Activated naive CD4-positive, alpha-beta T cell treated with anti-CD3 and anti-CD28 coated beads for 36 hours (primary cell): ENCODE measurements at regions of chr6 and their contacts with region 1.

Region 1: GRCh38 chr6:30616811-30617564 is at the start of gene PPP1R10:
- DNase-seq: peak; percentile 99
- H3K4me3 Mint-ChIP-seq: peak within 1 kb of the TSS; percentile 87
- H3K27ac Mint-ChIP-seq: peak within 1 kb of the TSS; percentile 95
- H3K4me1 Mint-ChIP-seq: peaks cover 37% of the 10 kb centered on the region
- H3K27me3 Mint-ChIP-seq: no peaks in the 10 kb centered on the region
- total RNA-seq, gene PPP1R10: 47.1 to 49.1 TPM

Region 2: GRCh38 chr6:30212865-30213666 is 403.9 kb before region 1 on chr6 and contains the start of gene TRIM26:
- CTCF ChIA-PET with region 1: no interaction called
- intact Hi-C with region 1: loop called (anchors 1 kb)
- DNase-seq: peak; percentile 99
- H3K4me3 Mint-ChIP-seq: peak within 1 kb of the TSS; percentile 94
- H3K27ac Mint-ChIP-seq: peak within 1 kb of the TSS; percentile 99
- H3K4me1 Mint-ChIP-seq: peaks cover 41% of the 10 kb centered on the region
- H3K27me3 Mint-ChIP-seq: no peaks in the 10 kb centered on the region
- total RNA-seq, gene TRIM26: 36.8 to 38.7 TPM

Region 3: DNA sequence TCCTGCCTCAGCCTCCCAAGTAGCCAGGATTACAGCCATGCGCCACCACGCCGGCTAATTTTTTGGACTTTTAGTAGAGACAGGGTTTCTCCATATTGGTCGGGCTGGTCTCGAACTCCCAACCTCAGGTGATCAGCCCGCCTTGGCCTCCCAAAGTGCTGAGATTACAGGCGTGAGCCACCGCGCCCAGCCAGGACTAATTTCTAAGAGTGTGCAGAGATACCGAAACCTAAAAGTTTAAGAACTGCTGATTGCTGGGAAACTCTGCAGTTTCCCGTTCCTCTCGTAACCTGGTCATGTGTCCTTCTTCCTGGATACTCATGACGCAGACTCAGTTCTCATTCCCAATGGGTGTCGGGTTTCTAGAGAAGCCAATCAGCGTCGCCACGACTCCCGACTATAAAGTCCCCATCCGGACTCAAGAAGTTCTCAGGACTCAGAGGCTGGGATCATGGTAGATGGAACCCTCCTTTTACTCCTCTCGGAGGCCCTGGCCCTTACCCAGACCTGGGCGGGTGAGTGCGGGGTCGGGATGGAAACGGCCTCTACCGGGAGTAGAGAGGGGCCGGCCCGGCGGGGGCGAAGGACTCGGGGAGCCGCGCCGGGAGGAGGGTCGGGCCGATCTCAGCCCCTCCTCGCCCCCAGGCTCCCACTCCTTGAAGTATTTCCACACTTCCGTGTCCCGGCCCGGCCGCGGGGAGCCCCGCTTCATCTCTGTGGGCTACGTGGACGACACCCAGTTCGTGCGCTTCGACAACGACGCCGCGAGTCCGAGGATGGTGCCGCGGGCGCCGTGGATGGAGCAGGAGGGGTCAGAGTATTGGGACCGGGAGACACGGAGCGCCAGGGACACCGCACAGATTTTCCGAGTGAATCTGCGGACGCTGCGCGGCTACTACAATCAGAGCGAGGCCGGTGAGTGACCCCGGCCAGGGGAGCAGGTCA is 127.6 kb before region 1 on chr6 and contains the start of gene HLA-E:
- CTCF ChIA-PET with region 1: interaction called, 18 read pairs
- intact Hi-C with region 1: loop called (anchors 1 kb)
- DNase-seq: peak; percentile 95
- H3K4me3 Mint-ChIP-seq: peak within 1 kb of the TSS; percentile 90
- H3K27ac Mint-ChIP-seq: peak within 1 kb of the TSS; percentile 97
- H3K4me1 Mint-ChIP-seq: peaks cover 54% of the 10 kb centered on the region
- H3K27me3 Mint-ChIP-seq: no peaks in the 10 kb centered on the region
- total RNA-seq, gene HLA-E: 598 to 608 TPM

Region 4: DNA sequence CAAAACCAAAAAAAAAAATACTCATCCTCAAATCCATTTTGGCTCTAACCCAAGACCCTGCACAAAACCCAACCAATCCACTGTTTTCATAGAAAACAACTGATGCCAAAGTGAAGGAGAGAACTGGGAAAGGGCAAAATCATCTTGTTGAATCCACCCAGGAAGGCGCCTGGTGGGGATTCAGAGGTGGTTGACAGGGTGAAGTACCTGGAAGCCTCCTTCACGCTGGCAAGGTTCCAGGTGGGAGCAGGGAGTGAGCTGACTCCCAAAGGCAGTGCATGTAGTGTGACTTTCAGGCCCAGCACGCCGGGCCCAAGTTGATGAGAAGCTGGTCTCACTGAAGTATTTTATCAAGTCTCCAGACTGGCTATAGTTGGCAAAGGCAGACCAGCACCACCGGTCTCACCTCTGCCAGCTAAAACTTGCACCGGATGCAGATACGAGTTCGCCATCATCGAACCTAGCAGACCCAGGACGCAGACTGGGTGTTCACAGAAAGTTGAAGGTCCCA is 16.5 kb before region 1 on chr6:
- CTCF ChIA-PET with region 1: interaction called, 38 read pairs
- intact Hi-C with region 1: no loop called
- DNase-seq: no peak
- H3K4me3 Mint-ChIP-seq: no peak overlapping the region
- H3K27ac Mint-ChIP-seq: peak overlapping the region; percentile 37
- H3K4me1 Mint-ChIP-seq: peaks cover 9% of the 10 kb centered on the region
- H3K27me3 Mint-ChIP-seq: no peaks in the 10 kb centered on the region

Region 5: DNA sequence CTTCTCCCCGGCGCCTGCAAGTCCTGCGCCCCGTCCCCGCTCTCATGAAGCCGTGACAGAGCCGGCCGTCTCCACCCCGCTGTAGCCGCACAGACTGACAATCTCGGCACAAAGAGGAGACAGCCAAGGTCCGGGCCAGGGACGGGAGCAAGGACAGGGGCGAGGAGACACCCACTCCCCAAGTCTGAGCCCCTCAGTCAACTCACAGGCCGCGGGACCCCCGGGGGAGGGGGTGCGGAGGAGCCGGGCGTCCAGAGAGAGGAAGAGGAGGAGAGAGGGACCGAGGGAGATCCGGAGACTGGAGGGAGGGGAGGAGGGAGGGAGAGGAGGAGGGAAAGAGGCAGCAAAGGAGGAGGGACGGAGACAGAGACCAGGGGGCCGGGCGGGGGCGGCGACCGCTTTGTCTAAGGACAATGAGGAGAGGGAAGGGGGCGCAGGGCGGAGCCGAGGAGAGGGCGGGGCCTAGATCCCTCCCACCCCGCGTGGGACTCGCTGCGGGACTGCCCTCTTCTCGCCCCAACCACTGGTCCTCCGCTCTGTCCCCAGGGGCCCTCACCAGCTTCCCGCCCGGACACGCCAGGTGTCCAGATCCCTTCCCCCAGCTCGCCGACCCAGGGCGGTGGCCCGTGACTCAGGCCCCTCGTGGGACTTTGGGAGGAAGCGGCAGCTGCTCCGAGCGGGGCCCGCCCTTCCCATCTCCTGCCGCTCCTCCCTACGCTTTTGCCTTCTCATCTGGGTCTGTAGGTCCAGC is 70.1 kb after region 1 on chr6:
- CTCF ChIA-PET with region 1: no interaction called
- intact Hi-C with region 1: loop called (anchors 1 kb)
- DNase-seq: peak; percentile 77
- H3K4me3 Mint-ChIP-seq: peak overlapping the region; percentile 96
- H3K27ac Mint-ChIP-seq: peak overlapping the region; percentile 100
- H3K4me1 Mint-ChIP-seq: peaks cover 36% of the 10 kb centered on the region
- H3K27me3 Mint-ChIP-seq: no peaks in the 10 kb centered on the region

Region 6: DNA sequence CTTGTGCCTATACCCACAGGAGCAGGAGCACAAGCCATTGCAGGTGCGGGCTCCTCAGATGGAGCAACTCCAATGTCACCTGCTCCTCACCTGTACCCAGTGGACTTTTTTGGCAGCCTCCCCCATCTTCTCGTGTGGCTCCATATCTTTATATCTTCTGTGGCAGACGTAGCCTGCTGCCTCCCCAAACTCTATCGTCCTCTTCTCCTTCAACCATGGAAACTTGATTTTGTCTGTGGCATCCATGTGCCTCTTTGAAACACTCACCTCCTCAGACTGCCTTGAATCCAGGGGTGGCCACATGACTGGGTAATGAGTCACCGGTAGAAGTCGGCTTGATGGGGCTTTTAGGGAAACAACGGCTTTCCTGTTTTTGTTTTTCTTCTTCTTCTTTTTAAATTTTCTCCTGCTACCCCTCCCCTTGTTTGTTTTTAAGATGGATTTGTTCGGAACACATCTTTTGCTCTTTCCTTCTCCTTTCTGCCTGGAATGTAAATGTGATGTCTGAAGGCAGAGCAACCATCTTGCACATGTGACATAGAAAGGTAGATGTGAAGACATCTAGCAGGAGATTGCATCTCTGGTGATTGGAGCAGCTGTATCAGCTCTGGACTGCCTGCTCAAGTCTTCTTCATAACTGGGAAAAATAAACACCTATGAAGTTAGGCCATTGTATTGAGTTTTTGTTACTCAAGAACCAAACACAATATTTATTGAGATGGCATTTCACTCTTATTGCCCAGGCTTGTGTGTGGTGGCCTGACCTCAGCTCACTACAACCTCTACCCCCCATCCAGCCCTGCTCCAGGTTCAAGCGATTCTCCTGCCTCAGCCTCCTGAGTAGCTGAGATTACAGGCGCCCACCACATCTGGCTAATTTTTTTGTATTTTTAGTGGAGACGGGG is 197.4 kb after region 1 on chr6:
- CTCF ChIA-PET with region 1: no interaction called
- intact Hi-C with region 1: loop called (anchors 5 kb)
- DNase-seq: peak; percentile 81
- H3K4me3 Mint-ChIP-seq: peak overlapping the region; percentile 48
- H3K27ac Mint-ChIP-seq: peak overlapping the region; percentile 95
- H3K4me1 Mint-ChIP-seq: peaks cover 94% of the 10 kb centered on the region
- H3K27me3 Mint-ChIP-seq: no peaks in the 10 kb centered on the region